ENCODE measurements at regions of chr15 and their contacts with region 1.

Region 1: GRCh38 chr15:59725172-59725486 is 36.0 kb upstream of the BNIP2 start:
- DNase-seq: no peak
- H3K4me3 ChIP-seq: no peak overlapping the region
- H3K27ac ChIP-seq: no peak overlapping the region
- H3K4me1 ChIP-seq: no peaks in the 10 kb centered on the region
- H3K27me3 ChIP-seq: no peaks in the 10 kb centered on the region
- CTCF ChIP-seq: no peak
- POLR2A ChIP-seq: no peak

Region 2: GRCh38 chr15:59492389-59493377 is 232.4 kb before region 1 on chr15:
- intact Hi-C with region 1: no loop called
- DNase-seq: peak; percentile 56 to 66
- H3K4me3 ChIP-seq: no peak overlapping the region
- H3K27ac ChIP-seq: no peak overlapping the region
- H3K4me1 ChIP-seq: peaks cover 3 to 5% of the 10 kb centered on the region in 2 donors
- H3K27me3 ChIP-seq: no peaks in the 10 kb centered on the region
- CTCF ChIP-seq: peak; percentile 51 to 91 (median 79)
- POLR2A ChIP-seq: no peak

Region 3: GRCh38 chr15:59862191-59863155 is 137.3 kb after region 1 on chr15:
- intact Hi-C with region 1: no loop called
- DNase-seq: no peak
- H3K4me3 ChIP-seq: no peak overlapping the region
- H3K27ac ChIP-seq: no peak overlapping the region
- H3K4me1 ChIP-seq: no peaks in the 10 kb centered on the region
- H3K27me3 ChIP-seq: no peaks in the 10 kb centered on the region
- CTCF ChIP-seq: no peak
- POLR2A ChIP-seq: no peak

Region 4: GRCh38 chr15:60326824-60327654 is 601.9 kb after region 1 on chr15:
- intact Hi-C with region 1: loop called (anchors 10 kb)
- DNase-seq: peak in 1 of 2 donors; percentile 11
- H3K4me3 ChIP-seq: no peak overlapping the region
- H3K27ac ChIP-seq: no peak overlapping the region
- H3K4me1 ChIP-seq: no peaks in the 10 kb centered on the region
- H3K27me3 ChIP-seq: no peaks in the 10 kb centered on the region
- CTCF ChIP-seq: peak; percentile 74 to 94 (median 84)
- POLR2A ChIP-seq: no peak